Endothelial cell of umbilical vein (primary cell): ENCODE measurements at regions of chr14 and their contacts with region 1.

Region 1: DNA sequence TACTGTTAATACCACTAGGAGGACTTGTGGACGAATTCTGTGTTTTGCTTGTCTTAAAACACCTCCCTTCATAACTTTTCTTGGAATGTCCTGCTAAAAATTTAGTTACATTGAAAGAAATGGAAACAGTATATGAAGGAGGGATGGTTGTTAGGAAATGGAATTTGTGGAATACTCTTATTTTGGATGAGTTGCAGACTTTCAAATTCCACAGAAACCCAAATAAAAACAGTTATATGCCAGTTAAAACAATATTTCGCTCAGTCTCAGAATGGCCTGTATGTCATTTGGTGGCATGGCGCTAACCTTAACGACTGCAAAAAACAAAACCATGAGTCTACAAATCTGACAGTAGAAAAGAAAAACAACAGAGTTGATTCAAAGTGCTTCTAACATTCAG is 12.2 kb upstream of the ARHGAP5 start:
- DNase-seq: no peak
- H3K4me3 ChIP-seq: no peak overlapping the region
- H3K27ac ChIP-seq: no peak overlapping the region
- H3K4me1 ChIP-seq: no peaks in the 10 kb centered on the region
- H3K27me3 ChIP-seq: peaks cover 0 to 6% of the 10 kb centered on the region in 2 experiments
- CTCF ChIP-seq: no peak
- POLR2A ChIP-seq: no peak

Region 2: GRCh38 chr14:31988244-31988643 is 76.7 kb before region 1 on chr14:
- CTCF ChIA-PET with region 1: no interaction called
- POLR2A ChIA-PET with region 1: no interaction called
- dilution Hi-C with region 1: no loop called
- intact Hi-C with region 1: loop called (anchors 2 kb)
- DNase-seq: no peak
- H3K4me3 ChIP-seq: no peak overlapping the region
- H3K27ac ChIP-seq: no peak overlapping the region
- H3K4me1 ChIP-seq: no peaks in the 10 kb centered on the region
- H3K27me3 ChIP-seq: no peaks in the 10 kb centered on the region
- CTCF ChIP-seq: no peak
- POLR2A ChIP-seq: no peak